Caco-2 (cell line): ENCODE measurements at regions of chr5 and their contacts with region 1.

Region 1: DNA sequence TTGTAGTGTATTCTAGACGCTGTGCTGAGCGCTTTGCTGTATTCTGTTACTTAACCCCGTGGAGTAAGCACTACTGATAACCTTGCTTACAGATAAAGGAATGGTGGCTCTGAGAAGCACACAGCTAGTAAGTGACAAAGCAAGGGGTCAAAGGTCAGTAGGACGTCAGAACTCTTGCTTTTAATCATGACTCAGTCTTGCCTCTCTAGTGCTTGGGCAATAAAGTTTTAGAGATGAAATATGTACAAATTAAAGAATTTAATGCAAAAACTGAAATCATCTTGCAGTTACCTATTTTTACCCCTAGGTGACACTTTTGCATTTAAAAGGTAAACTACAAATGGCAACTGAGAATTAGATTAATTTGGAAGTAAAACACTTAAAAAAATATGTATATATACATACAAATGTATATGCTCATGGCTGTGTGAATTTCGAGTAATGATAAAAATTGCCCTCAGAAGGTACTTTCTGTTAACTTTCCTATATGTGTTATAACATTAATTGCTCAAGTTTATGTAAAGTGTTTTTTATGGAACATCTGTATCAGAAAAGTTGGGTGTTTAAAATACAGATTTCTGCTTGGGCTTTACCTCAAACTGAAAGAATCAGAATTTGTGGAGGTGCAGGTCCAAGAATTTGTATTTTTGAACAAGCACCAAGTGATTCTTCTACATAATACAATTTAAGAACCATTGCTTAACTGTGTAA is 175.1 kb upstream of the DAB2 start:
- DNase-seq: peak; percentile 56 to 65
- H3K4me3 ChIP-seq: no peak overlapping the region
- H3K4me3 Mint-ChIP-seq: no peak overlapping the region
- H3K27ac Mint-ChIP-seq: no peak overlapping the region
- H3K4me1 ChIP-seq: peaks cover 21% of the 10 kb centered on the region
- H3K4me1 Mint-ChIP-seq: no peaks in the 10 kb centered on the region
- H3K27me3 ChIP-seq: no peaks in the 10 kb centered on the region
- H3K27me3 Mint-ChIP-seq: no peaks in the 10 kb centered on the region
- CTCF ChIP-seq: peak; percentile 36 to 62

Region 2: GRCh38 chr5:39624268-39624886 is 24.5 kb after region 1 on chr5:
- CTCF ChIA-PET with region 1: no interaction called
- POLR2A ChIA-PET with region 1: no interaction called
- intact Hi-C with region 1: loop called (anchors 1 kb)
- DNase-seq: peak; percentile 75 to 86
- H3K4me3 ChIP-seq: no peak overlapping the region
- H3K4me3 Mint-ChIP-seq: peak overlapping the region; percentile 59
- H3K27ac Mint-ChIP-seq: peak overlapping the region; percentile 81
- H3K4me1 ChIP-seq: peaks cover 26% of the 10 kb centered on the region
- H3K4me1 Mint-ChIP-seq: peaks cover 19% of the 10 kb centered on the region
- H3K27me3 ChIP-seq: no peaks in the 10 kb centered on the region
- H3K27me3 Mint-ChIP-seq: peaks cover 3% of the 10 kb centered on the region
- CTCF ChIP-seq: no peak

Region 3: DNA sequence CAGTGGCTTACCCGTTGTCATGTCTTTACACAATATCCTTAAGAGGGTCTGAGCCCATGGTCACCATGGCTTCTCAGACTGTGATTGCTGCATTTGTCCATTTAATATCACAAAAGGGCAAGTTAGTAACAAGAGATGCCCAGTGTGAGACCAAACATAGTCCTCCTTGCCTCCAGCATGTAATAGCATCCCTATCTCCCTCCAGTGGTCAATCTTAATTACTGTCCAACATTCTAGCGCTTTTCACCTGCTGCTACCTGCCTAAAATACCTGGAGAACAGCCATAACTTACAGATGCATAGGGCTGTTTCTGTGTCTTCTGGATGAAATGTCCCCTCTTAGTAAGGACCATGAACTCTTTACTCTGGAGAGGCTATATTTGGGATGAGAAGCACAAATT is 92.1 kb after region 1 on chr5:
- CTCF ChIA-PET with region 1: no interaction called
- POLR2A ChIA-PET with region 1: no interaction called
- intact Hi-C with region 1: loop called (anchors 1 kb)
- DNase-seq: peak in 1 of 2 experiments; percentile 38
- H3K4me3 ChIP-seq: no peak overlapping the region
- H3K4me3 Mint-ChIP-seq: no peak overlapping the region
- H3K27ac Mint-ChIP-seq: no peak overlapping the region
- H3K4me1 ChIP-seq: no peaks in the 10 kb centered on the region
- H3K4me1 Mint-ChIP-seq: no peaks in the 10 kb centered on the region
- H3K27me3 ChIP-seq: no peaks in the 10 kb centered on the region
- H3K27me3 Mint-ChIP-seq: no peaks in the 10 kb centered on the region
- CTCF ChIP-seq: peak; percentile 42 to 46

Region 4: GRCh38 chr5:40106847-40107246 is 507.0 kb after region 1 on chr5:
- CTCF ChIA-PET with region 1: no interaction called
- POLR2A ChIA-PET with region 1: no interaction called
- intact Hi-C with region 1: no loop called
- DNase-seq: no peak
- H3K4me3 ChIP-seq: no peak overlapping the region
- H3K4me3 Mint-ChIP-seq: no peak overlapping the region
- H3K27ac Mint-ChIP-seq: no peak overlapping the region
- H3K4me1 ChIP-seq: peaks cover 4% of the 10 kb centered on the region; the same call in 1 of the 2 replicates
- H3K4me1 Mint-ChIP-seq: no peaks in the 10 kb centered on the region
- H3K27me3 ChIP-seq: no peaks in the 10 kb centered on the region
- H3K27me3 Mint-ChIP-seq: no peaks in the 10 kb centered on the region
- CTCF ChIP-seq: no peak